ENCODE measurements at regions of chr17 and their contacts with region 1.

Region 1: DNA sequence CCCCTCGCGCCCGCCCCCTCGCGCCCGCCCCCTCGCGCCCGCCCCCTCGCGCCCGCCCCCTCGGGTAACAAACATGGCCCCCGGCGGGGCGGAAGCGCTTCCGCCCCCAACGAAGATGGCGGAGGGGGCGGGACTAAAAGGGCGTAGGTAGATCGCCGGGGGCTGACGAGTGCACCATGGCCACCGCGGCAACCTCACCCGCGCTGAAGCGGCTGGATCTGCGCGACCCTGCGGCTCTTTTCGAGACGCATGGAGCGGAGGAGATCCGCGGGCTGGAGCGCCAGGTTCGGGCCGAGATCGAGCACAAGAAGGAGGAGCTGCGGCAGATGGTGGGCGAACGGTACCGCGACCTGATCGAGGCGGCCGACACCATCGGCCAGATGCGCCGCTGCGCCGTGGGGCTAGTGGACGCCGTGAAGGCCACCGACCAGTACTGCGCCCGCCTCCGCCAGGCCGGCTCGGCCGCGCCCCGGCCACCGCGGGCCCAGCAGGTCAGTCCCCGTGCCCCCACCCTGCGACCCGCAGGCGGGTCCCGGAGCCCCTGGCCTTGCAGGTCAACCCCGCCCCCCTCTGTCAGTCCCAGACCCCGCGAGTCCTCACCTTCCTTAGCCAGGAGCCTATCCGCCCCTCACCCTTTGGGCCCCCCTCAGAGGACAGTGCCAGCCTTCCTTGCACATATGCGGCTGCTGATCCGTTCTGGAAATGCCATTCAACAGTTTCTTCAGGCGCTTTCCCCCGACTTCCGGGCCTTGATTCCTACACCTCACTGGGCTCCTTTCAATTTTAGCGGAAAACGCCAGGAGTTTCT is at the start of gene COG1:
- DNase-seq: peak; percentile 91 to 96
- ATAC-seq: peak; percentile 72 to 80
- H3K4me3 ChIP-seq: peak within 1 kb of the TSS; percentile 79
- H3K27ac ChIP-seq: peak within 1 kb of the TSS; percentile 88 to 94
- H3K4me1 ChIP-seq: peaks cover 8% of the 10 kb centered on the region; the same call in 1 of the 3 replicates
- CTCF ChIP-seq: no peak
- EP300 ChIP-seq: no peak
- POLR2A ChIP-seq: peak; percentile 74
- RAD21 ChIP-seq: no peak
- polyA plus RNA-seq, gene COG1: 26.0 and 30.6 TPM in 2 replicates

Region 2: GRCh38 chr17:72580321-72581127 is 612.6 kb before region 1 on chr17:
- CTCF ChIA-PET with region 1: interaction called, 12 read pairs
- POLR2A ChIA-PET with region 1: no interaction called
- DNase-seq: peak in 1 of 2 experiments; percentile 50
- ATAC-seq: peak; percentile 42 to 47
- H3K4me3 ChIP-seq: no peak overlapping the region
- H3K27ac ChIP-seq: peak overlapping the region in 1 of 2 experiments; percentile 45; a peak in 3 of 6 replicates
- H3K4me1 ChIP-seq: peaks cover 58% of the 10 kb centered on the region
- CTCF ChIP-seq: no peak
- EP300 ChIP-seq: no peak
- POLR2A ChIP-seq: no peak
- RAD21 ChIP-seq: no peak

Region 3: DNA sequence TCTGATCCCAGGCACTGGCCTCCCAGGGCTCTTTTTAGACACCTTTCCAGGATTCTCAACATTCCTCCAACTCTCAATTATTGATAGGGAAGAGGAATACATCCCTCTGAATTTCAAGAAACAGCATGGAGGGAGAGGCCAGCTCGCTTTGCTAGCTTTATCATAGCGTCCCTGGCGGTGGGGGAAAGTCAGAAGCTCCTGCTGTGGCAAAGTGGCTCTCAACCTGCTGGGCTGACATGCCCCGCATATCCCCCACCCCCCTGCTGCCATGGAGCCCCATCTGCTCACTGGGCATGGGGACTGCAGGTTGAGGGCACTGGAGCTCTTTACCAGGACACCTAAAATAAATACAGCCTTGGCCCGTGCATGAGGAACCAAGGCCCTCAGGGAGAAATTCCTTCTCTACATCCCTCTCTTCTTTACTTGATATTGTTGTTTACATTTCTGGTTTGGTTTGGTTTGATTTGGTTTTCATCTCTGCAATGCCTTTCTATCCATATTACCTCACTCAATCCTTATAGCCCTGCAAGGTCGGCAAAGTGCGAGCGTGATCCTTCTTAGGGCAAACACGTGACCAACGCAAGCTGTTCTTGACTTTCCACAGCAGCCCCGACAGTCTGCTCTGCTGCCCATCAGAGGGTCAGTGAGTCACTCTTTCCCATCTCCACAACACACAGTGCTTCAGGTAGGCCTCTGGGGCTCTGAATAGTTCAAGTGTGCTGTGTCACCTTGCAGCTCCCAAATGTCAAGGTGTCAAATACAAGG is 240.7 kb before region 1 on chr17:
- CTCF ChIA-PET with region 1: no interaction called
- POLR2A ChIA-PET with region 1: no interaction called
- DNase-seq: no peak
- ATAC-seq: peak; percentile 22 to 39; a peak in 1 of 6 replicates
- H3K4me3 ChIP-seq: no peak overlapping the region
- H3K27ac ChIP-seq: no peak overlapping the region
- H3K4me1 ChIP-seq: no peaks in the 10 kb centered on the region; the same call in 2 of the 3 replicates
- CTCF ChIP-seq: no peak
- EP300 ChIP-seq: no peak
- POLR2A ChIP-seq: no peak
- RAD21 ChIP-seq: no peak

Region 4: DNA sequence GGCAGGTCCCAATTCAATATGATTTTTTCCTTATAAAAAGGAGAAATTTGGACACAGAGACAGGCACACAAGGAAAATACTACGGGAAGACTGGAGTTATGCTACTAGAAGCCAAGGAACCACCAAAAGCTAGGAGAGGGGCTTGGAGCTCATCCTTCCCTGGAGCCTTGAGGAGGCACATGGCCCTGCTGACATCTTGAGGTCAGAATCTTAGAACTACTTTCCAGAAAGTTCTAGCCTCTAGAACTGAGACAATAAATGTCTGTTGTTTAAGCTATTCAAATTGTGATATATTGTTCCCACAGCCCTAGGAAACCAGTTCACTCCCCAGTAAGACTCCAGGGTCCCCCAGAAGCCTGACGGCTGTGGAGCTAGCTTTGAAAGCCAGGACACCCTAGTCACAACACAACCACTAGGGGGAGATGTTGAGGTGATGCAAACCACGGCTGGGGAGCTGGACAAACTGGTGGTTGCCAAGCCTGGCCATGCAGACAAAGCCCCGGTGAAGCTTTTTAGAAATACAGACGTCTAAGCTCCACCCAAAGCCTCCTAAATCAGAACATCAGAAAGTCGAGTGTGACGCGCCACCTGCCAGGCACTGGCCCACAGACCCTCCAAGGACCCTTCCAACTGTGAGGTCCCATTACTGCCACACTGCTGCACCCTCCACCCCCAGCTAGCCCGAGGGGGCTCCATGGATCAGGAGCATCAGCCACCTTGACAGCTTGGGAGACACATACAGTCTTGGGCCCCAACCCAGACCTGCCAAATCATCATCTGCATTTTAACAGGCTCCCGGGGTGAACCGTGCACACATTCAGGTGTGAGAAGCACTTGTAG is 207.0 kb before region 1 on chr17:
- CTCF ChIA-PET with region 1: interaction called, 24 read pairs
- POLR2A ChIA-PET with region 1: no interaction called
- DNase-seq: peak; percentile 79 to 93
- ATAC-seq: peak; percentile 86 to 97
- H3K4me3 ChIP-seq: no peak overlapping the region
- H3K27ac ChIP-seq: no peak overlapping the region
- H3K4me1 ChIP-seq: peaks cover 36% of the 10 kb centered on the region
- CTCF ChIP-seq: peak; percentile 86
- EP300 ChIP-seq: no peak
- POLR2A ChIP-seq: no peak
- RAD21 ChIP-seq: peak; percentile 76 to 77

Region 5: DNA sequence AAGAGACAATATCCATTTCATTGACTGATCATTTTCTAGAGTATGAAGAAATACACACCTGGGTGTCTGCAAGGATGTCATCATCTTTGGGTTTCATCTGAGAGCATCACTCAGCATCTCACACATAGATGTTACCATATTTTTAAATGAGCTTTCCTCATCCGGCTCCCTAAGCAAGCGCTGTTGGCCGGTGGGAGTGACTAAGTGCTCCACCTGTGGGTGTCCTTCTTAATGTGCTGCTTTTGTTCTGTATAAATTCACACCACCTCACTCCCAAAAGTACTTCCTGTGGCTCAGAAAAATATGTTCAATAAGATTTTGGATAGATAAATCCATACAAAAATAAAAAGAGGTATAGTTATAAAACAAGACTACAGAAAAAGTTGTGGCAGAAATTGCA is 20.8 kb before region 1 on chr17:
- CTCF ChIA-PET with region 1: interaction called, 50 read pairs
- POLR2A ChIA-PET with region 1: no interaction called
- DNase-seq: no peak
- ATAC-seq: no peak
- H3K4me3 ChIP-seq: no peak overlapping the region
- H3K27ac ChIP-seq: no peak overlapping the region
- H3K4me1 ChIP-seq: no peaks in the 10 kb centered on the region
- CTCF ChIP-seq: no peak
- EP300 ChIP-seq: no peak
- POLR2A ChIP-seq: no peak
- RAD21 ChIP-seq: no peak

Region 6: GRCh38 chr17:73203135-73203787 is 10.2 kb after region 1 on chr17:
- CTCF ChIA-PET with region 1: interaction called, 23 read pairs
- POLR2A ChIA-PET with region 1: no interaction called
- DNase-seq: no peak
- ATAC-seq: no peak
- H3K4me3 ChIP-seq: no peak overlapping the region
- H3K27ac ChIP-seq: no peak overlapping the region
- H3K4me1 ChIP-seq: no peaks in the 10 kb centered on the region
- CTCF ChIP-seq: no peak
- EP300 ChIP-seq: no peak
- POLR2A ChIP-seq: no peak
- RAD21 ChIP-seq: no peak

Region 7: DNA sequence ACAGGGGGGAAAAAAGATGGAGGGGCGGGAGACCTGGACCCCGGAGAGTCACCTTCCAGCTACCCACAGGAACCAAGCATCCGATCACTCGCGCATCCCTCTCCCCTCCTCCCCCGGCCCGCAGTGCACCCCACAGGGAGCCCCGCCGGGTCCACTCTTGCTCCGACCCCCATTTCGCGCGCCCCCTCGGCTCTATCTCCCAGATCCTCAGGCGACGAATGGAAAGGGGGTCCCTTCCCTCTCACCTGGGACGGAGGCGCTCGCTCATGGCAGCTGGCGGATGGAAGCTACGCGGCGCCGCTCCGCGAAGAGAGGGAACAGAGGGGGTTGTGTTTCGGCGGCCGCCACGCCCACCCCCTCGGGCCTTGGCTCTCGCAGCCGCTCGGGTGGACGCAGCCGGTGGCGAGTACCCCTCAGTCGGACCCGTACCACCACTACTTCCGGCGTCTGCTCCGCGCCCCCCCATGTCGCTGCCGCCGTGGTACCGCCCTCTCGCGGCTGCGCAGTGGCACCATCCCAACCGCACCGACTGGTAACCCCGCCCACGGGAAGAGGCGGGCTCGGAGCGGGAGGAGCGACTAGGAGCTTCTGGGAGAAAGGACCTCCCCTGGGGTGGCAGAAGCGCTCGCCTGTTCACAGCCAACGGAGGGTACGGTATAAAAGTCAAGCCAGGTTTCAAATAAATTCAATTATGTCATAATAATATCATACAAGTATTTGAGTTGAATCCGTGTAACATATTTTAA is 38.9 kb after region 1 on chr17:
- CTCF ChIA-PET with region 1: interaction called, 10 read pairs
- POLR2A ChIA-PET with region 1: interaction called, 8 read pairs
- DNase-seq: peak; percentile 94 to 95
- ATAC-seq: peak; percentile 84 to 95
- H3K4me3 ChIP-seq: peak overlapping the region; percentile 88
- H3K27ac ChIP-seq: peak overlapping the region; percentile 89 to 95
- H3K4me1 ChIP-seq: peaks cover 44% of the 10 kb centered on the region
- CTCF ChIP-seq: no peak
- EP300 ChIP-seq: no peak
- POLR2A ChIP-seq: peak; percentile 88
- RAD21 ChIP-seq: peak in 1 of 2 experiments; percentile 1; a peak in 1 of 5 replicates

Region 8: GRCh38 chr17:73247726-73248125 is 54.6 kb after region 1 on chr17:
- CTCF ChIA-PET with region 1: interaction called, 12 read pairs
- POLR2A ChIA-PET with region 1: no interaction called
- DNase-seq: peak in 1 of 2 experiments; percentile 32
- ATAC-seq: peak in 1 of 2 experiments; percentile 41; a peak in 1 of 6 replicates
- H3K4me3 ChIP-seq: no peak overlapping the region
- H3K27ac ChIP-seq: no peak overlapping the region
- H3K4me1 ChIP-seq: no peaks in the 10 kb centered on the region
- CTCF ChIP-seq: peak; percentile 47
- EP300 ChIP-seq: no peak
- POLR2A ChIP-seq: no peak
- RAD21 ChIP-seq: peak; percentile 38; a peak in 3 of 5 replicates